Calu3 (cell line): ENCODE measurements at regions of chr12 and their contacts with region 1.

Region 1: GRCh38 chr12:127677537-127678131 is 589.3 kb upstream of the TMEM132C start:
- DNase-seq: peak; percentile 67
- H3K4me3 Mint-ChIP-seq: no peak overlapping the region
- H3K27ac Mint-ChIP-seq: no peak overlapping the region
- H3K4me1 Mint-ChIP-seq: no peaks in the 10 kb centered on the region
- H3K27me3 Mint-ChIP-seq: no peaks in the 10 kb centered on the region
- CTCF ChIP-seq: peak; percentile 57

Region 2: GRCh38 chr12:127108360-127109215 is 569.0 kb before region 1 on chr12:
- CTCF ChIA-PET with region 1: interaction called, 11 read pairs
- intact Hi-C with region 1: loop called (anchors 1 kb)
- DNase-seq: peak; percentile 64
- H3K4me3 Mint-ChIP-seq: no peak overlapping the region
- H3K27ac Mint-ChIP-seq: no peak overlapping the region
- H3K4me1 Mint-ChIP-seq: no peaks in the 10 kb centered on the region
- H3K27me3 Mint-ChIP-seq: no peaks in the 10 kb centered on the region
- CTCF ChIP-seq: peak; percentile 53

Region 3: DNA sequence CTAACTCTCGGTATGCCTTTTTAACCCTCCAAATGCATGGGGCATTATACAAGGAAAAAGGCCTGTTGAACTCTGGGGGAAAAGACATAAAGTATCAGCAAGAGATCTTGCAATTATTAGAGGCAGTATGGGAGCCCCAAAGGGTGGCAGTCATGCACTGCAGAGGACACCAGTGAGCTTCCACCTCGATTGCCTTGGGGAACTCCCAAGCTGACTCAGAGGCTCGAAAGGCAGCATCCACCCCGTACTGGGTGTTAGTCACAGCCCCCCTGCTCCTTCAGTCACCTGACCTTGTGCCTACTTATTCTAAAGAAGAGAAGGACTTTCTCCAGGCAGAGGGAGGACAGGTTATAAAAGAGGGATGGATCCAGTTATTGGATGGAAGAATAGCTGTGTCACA is 192.1 kb before region 1 on chr12:
- CTCF ChIA-PET with region 1: interaction called, 11 read pairs
- intact Hi-C with region 1: loop called (anchors 1 kb)
- DNase-seq: peak; percentile 67
- H3K4me3 Mint-ChIP-seq: no peak overlapping the region
- H3K27ac Mint-ChIP-seq: no peak overlapping the region
- H3K4me1 Mint-ChIP-seq: peaks cover 13% of the 10 kb centered on the region
- H3K27me3 Mint-ChIP-seq: no peaks in the 10 kb centered on the region
- CTCF ChIP-seq: no peak